ENCODE measurements at regions of chr20 and their contacts with region 1.

Region 1: DNA sequence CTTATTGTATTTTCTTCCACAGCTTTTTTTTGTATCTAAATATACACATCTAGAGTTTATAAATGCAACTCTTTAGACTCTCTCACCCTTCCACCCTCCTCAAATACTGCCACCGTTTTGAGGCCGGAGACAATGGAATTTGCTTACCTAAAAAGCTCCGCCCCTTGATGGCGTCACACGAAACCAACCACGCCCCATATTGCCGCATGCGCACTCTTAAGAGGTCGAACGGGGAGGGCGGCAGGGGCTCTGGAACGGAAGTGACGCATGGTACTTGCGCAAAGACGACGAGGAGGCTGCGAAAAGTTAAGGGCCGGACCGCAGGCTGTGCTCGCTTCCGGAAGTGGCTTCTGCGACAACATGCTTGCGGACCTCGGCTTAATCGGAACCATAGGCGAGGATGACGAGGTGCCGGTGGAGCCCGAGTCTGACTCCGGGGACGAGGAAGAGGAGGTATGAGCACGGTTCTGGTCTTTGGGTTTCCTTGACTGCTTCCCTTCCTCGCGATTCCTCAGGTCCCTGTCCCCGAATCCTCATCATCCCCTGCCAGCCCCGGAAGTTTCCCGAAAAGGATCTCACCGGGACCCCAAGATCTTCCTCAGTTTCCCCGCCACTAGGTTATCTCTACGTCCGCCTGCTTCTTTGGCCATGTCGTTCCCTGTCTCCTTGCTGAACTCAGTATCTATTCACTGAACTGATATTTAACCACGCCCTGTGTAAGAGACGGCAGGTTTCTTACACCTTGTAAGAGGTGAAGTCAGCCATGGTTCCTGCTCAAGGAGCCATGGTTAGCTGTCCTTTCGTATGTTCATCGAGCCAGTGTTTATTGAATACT is at the start of gene DDX27:
- DNase-seq: peak; percentile 96
- H3K4me3 Mint-ChIP-seq: peak within 1 kb of the TSS; percentile 99
- H3K27ac Mint-ChIP-seq: peak within 1 kb of the TSS; percentile 98
- H3K4me1 Mint-ChIP-seq: peaks cover 17% of the 10 kb centered on the region
- H3K27me3 Mint-ChIP-seq: no peaks in the 10 kb centered on the region
- total RNA-seq, gene DDX27: 51.4 and 54.0 TPM in 2 replicates

Region 2: DNA sequence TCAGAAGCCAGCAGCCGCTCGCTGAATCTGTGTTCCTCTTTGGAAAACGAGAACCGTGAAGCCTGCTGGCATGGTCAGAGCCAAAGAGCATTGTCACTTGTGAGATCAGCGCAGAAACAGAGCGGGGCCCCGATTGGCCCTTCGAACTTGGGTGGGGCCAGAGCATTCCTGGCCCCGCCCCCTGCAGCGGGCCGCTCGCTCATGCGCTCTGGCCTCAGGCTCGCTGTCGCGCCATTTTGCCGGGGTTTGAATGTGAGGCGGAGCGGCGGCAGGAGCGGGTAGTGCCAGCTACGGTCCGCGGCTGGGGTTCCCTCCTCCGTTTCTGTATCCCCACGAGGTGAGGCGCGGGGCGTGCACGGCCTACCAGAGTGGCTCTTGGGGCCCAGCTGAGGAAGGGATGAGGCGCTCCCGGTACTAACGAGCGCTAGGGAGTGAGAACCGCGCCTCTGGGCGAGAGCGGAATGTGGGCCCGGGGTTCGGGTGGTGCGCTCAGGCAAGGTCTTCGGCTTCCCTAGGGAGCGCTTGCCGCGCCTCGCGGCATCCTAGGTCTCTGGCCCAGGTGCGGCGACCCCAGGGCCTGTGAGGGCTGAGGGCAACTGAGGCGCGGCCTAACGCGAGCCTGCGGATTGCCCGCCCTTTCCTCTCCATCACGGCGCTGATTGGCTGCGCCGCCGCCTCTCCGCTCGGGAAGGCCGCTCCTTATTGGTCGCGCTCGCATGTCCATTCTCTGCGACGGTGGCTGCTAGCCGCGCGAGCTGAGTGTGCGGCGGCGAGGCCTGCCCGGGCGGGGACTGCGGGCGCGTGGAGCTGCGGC is 173.0 kb before region 1 on chr20 and contains the start of gene CSE1L:
- intact Hi-C with region 1: loop called (anchors 5 kb)
- DNase-seq: peak; percentile 94
- H3K4me3 Mint-ChIP-seq: peak within 1 kb of the TSS; percentile 98
- H3K27ac Mint-ChIP-seq: peak within 1 kb of the TSS; percentile 100
- H3K4me1 Mint-ChIP-seq: peaks cover 27% of the 10 kb centered on the region
- H3K27me3 Mint-ChIP-seq: no peaks in the 10 kb centered on the region
- total RNA-seq, gene CSE1L: 114 TPM in 2 replicates

Region 3: GRCh38 chr20:49132995-49133478 is 86.3 kb before region 1 on chr20:
- intact Hi-C with region 1: loop called (anchors 1 kb)
- DNase-seq: no peak
- H3K4me3 Mint-ChIP-seq: no peak overlapping the region
- H3K27ac Mint-ChIP-seq: no peak overlapping the region
- H3K4me1 Mint-ChIP-seq: peaks cover 4% of the 10 kb centered on the region
- H3K27me3 Mint-ChIP-seq: no peaks in the 10 kb centered on the region